WTC11 (cell line): ENCODE measurements at regions of chr6 and their contacts with region 1.

Region 1: GRCh38 chr6:161618831-161619454 is 345.1 kb upstream of the AGPAT4 start:
- DNase-seq: peak; percentile 54
- ATAC-seq: peak; percentile 88
- H3K4me3 Mint-ChIP-seq: no peak overlapping the region
- H3K27ac Mint-ChIP-seq: no peak overlapping the region
- H3K4me1 Mint-ChIP-seq: no peaks in the 10 kb centered on the region
- H3K27me3 Mint-ChIP-seq: no peaks in the 10 kb centered on the region
- CTCF ChIP-seq: no peak

Region 2: DNA sequence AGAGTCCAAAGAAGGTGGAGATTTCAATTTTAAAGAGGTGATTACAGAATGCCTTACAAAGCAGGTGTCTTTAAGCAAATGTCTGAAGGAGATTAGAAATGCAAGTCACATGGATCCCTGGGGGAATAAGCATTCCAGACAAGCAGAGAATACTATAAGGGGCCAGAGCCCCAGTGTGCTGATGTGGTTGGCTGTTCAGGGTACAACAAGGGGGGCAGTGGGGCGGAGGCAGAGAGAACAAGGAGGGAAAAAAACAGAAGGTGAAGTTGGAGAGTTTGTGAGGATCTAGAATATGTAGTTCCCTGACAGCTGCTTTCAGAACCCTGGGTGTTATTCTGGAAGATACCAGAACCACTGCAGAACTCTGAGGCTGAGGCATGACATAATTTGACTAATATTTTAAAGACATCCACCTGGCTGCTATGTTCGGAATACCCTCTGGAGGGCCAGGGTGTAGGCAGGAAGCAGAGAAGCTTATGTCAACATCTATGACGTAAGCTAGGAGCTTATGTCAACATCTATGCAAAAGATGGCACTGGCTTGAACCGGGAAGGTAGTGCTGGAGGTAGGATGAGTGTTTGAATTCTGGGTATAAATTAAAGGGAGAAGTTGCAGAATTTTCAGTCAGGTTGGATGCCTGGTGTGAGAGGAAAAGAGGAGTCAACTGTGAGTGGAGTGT is 68.8 kb before region 1 on chr6:
- CTCF ChIA-PET with region 1: interaction called, 10 read pairs
- POLR2A ChIA-PET with region 1: no interaction called
- DNase-seq: no peak
- ATAC-seq: peak; percentile 72
- H3K4me3 Mint-ChIP-seq: no peak overlapping the region
- H3K27ac Mint-ChIP-seq: no peak overlapping the region
- H3K4me1 Mint-ChIP-seq: peaks cover 26% of the 10 kb centered on the region
- H3K27me3 Mint-ChIP-seq: no peaks in the 10 kb centered on the region
- CTCF ChIP-seq: no peak

Region 3: GRCh38 chr6:161694995-161695394 is 76.1 kb after region 1 on chr6:
- CTCF ChIA-PET with region 1: interaction called, 20 read pairs
- POLR2A ChIA-PET with region 1: no interaction called
- DNase-seq: no peak
- ATAC-seq: peak; percentile 95
- H3K4me3 Mint-ChIP-seq: no peak overlapping the region
- H3K27ac Mint-ChIP-seq: no peak overlapping the region
- H3K4me1 Mint-ChIP-seq: no peaks in the 10 kb centered on the region
- H3K27me3 Mint-ChIP-seq: no peaks in the 10 kb centered on the region
- CTCF ChIP-seq: peak; percentile 38